CD14-positive monocyte (primary cell): ENCODE measurements at regions of chr14 and their contacts with region 1.

Region 1: DNA sequence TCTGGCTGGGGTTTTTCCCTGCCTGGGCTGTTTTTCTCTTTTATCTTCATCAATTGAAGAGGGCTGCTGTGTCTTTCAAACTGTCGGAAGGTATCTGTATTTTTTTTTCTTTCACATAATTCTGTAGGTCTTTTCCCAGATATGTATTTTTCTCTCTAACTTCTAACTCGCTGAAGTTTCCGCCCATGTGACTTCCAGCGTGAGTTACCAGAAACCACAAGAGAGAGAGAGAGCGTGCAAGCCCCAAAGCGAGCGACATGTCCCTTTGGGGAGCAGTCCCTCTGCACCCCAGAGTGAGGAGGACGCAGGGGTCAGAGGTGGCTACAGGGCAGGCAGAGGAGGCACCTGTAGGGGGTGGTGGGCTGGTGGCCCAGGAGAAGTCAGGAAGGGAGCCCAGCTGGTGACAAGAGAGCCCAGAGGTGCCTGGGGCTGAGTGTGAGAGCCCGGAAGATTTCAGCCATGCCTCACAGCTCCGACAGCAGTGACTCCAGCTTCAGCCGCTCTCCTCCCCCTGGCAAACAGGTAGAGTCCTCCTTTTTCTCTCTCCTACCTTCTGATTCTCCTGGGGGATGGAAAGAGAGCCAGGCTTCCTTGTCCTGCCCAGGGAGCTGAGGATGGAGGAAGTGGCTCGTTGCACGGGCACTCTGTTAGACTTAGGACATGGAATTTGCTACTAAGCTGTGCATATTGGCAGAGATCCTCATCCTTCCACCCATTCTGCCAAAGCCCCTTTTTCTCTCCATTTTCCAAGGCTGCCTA is at the start of gene BATF:
- DNase-seq: peak; percentile 38 to 70 (median 64)
- H3K4me3 ChIP-seq: peak within 1 kb of the TSS; percentile 61 to 89 (median 64)
- H3K4me3 Mint-ChIP-seq: peak within 1 kb of the TSS; percentile 99
- H3K27ac ChIP-seq: peak within 1 kb of the TSS; percentile 45 to 88
- H3K27ac Mint-ChIP-seq: peak within 1 kb of the TSS; percentile 87 to 96 (median 90)
- H3K4me1 ChIP-seq: peaks cover 31 to 41% of the 10 kb centered on the region in 2 donors
- H3K4me1 Mint-ChIP-seq: peaks cover 54% of the 10 kb centered on the region
- H3K27me3 ChIP-seq: no peaks in the 10 kb centered on the region
- H3K27me3 Mint-ChIP-seq: peaks cover 0 to 2% (median 0%) of the 10 kb centered on the region in 3 donors
- CTCF ChIP-seq: no peak
- polyA plus RNA-seq, gene BATF: 12.6 to 25.8 (median 20.9) TPM

Region 2: GRCh38 chr14:75533791-75534555 is 11.6 kb after region 1 on chr14:
- intact Hi-C with region 1: no loop called
- DNase-seq: no peak
- H3K4me3 ChIP-seq: no peak overlapping the region
- H3K4me3 Mint-ChIP-seq: no peak overlapping the region
- H3K27ac ChIP-seq: peak overlapping the region in 1 of 2 donors; percentile 49
- H3K27ac Mint-ChIP-seq: peak overlapping the region in 4 of 7 donors; percentile 12 to 78 (median 54)
- H3K4me1 ChIP-seq: peaks cover 12 to 16% of the 10 kb centered on the region in 2 donors
- H3K4me1 Mint-ChIP-seq: peaks cover 21% of the 10 kb centered on the region
- H3K27me3 ChIP-seq: no peaks in the 10 kb centered on the region
- H3K27me3 Mint-ChIP-seq: peaks cover 0 to 2% (median 0%) of the 10 kb centered on the region in 3 donors
- CTCF ChIP-seq: no peak

Region 3: DNA sequence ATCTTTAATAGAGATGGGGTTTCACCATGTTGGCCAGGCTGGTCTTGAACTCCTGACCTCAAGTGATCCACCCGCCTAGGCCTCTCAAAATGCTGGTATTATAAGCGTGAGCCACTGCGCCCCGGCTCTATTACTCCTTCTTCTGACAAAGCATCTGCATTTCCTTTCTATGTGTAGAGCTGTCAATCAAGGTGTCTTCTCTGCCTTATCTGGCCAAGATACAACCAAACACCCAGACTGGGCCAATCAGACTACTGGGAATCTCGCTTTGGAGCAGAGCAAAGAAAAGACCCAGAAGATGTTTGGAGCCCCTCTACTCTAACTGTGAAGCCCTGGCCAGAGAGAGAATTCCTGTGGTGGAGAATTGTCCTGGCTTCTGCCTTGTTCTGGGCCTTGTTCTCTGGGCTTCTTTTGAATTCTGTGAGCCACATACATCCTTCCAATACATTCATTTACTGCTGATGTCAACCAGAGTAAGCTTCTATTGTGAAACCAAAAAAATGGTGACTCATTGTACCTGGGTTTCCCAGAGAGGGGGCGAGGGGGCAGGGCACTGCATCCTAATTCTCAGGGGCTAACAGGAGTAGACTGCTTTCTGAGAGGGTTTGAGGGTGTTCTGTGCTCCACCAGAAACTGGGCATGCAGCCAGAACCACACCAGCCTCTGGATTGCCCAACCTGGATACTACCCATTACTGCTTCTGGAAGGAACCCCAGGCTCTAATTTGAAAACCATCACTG is 37.2 kb after region 1 on chr14:
- intact Hi-C with region 1: loop called in 1 of 2 experiments (anchors 5 kb)
- DNase-seq: peak; percentile 43 to 69 (median 59)
- H3K4me3 ChIP-seq: no peak overlapping the region
- H3K4me3 Mint-ChIP-seq: no peak overlapping the region
- H3K27ac ChIP-seq: no peak overlapping the region
- H3K27ac Mint-ChIP-seq: peak overlapping the region in 3 of 7 donors; percentile 31 to 58 (median 51)
- H3K4me1 ChIP-seq: peaks cover 18 to 20% of the 10 kb centered on the region in 2 donors
- H3K4me1 Mint-ChIP-seq: peaks cover 22% of the 10 kb centered on the region
- H3K27me3 ChIP-seq: no peaks in the 10 kb centered on the region
- H3K27me3 Mint-ChIP-seq: peaks cover 0 to 4% (median 3%) of the 10 kb centered on the region in 3 donors
- CTCF ChIP-seq: no peak